PC-9 (cell line): ENCODE measurements at regions of chr15 and their contacts with region 1.

Region 1: DNA sequence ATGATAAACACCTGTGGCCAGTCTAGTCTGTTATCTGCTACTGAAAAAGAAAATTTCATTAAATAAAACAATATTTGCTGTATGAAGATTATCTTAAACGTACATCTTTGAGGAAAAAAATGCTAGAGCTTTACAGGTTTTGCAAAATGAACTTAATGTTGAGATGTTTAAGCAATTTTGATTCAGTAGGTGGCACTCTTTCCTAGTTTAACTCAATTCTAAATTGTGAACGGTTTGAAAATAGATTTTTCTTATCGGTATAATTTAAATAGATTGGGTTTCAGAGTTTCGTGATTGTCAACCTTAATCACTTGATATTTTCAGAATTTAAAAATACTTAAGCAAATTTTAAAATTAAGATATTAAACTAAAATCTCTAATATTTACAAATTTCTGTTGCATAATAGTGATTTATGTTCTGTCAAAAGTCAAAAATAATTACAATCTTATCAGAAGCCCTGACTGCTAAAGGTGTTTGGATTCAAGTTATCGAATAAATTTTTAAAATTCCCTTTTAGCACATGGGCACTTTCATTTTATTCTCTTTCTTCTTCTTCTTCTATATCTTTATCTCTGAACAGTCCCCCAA is 7.0 kb upstream of the RNF111 start:
- DNase-seq: no peak
- H3K4me3 ChIP-seq: no peak overlapping the region
- H3K27ac ChIP-seq: no peak overlapping the region
- H3K4me1 ChIP-seq: no peaks in the 10 kb centered on the region
- H3K27me3 ChIP-seq: no peaks in the 10 kb centered on the region
- CTCF ChIP-seq: peak; percentile 61

Region 2: GRCh38 chr15:58340176-58340575 is 640.3 kb before region 1 on chr15:
- CTCF ChIA-PET with region 1: no interaction called
- POLR2A ChIA-PET with region 1: no interaction called
- intact Hi-C with region 1: no loop called
- DNase-seq: no peak
- H3K4me3 ChIP-seq: no peak overlapping the region
- H3K27ac ChIP-seq: no peak overlapping the region
- H3K4me1 ChIP-seq: peaks cover 7% of the 10 kb centered on the region; the same call in 1 of the 2 replicates
- H3K27me3 ChIP-seq: no peaks in the 10 kb centered on the region
- CTCF ChIP-seq: no peak

Region 3: GRCh38 chr15:59042041-59042440 is 61.6 kb after region 1 on chr15:
- CTCF ChIA-PET with region 1: no interaction called
- POLR2A ChIA-PET with region 1: interaction called, 19 read pairs
- intact Hi-C with region 1: no loop called
- DNase-seq: no peak
- H3K4me3 ChIP-seq: no peak overlapping the region
- H3K27ac ChIP-seq: no peak overlapping the region
- H3K4me1 ChIP-seq: no peaks in the 10 kb centered on the region
- H3K27me3 ChIP-seq: no peaks in the 10 kb centered on the region
- CTCF ChIP-seq: no peak

Region 4: DNA sequence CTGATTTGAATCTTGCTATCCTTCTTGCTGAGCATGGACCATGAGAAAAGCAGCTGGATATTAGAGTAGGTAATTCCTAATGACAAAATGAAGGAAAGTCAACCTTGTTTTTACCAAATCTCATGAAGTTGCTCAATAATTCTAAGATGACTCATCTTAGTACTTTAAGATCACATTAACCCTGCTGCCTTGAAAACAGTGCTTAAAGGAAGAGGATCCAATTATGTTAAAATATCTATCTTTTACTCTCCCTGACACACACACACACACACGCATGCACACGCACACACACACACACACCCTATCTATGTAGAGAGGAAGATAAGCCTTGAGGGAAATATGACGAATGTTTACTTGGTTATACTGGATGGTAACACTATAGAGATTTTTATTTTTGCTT is 408.2 kb after region 1 on chr15:
- CTCF ChIA-PET with region 1: no interaction called
- POLR2A ChIA-PET with region 1: interaction called, 14 read pairs
- intact Hi-C with region 1: no loop called
- DNase-seq: peak in 1 of 2 experiments; percentile 52
- H3K4me3 ChIP-seq: no peak overlapping the region
- H3K27ac ChIP-seq: peak overlapping the region; percentile 11; the same call in 1 of the 2 replicates
- H3K4me1 ChIP-seq: peaks cover 9% of the 10 kb centered on the region
- H3K27me3 ChIP-seq: no peaks in the 10 kb centered on the region
- CTCF ChIP-seq: no peak

Region 5: DNA sequence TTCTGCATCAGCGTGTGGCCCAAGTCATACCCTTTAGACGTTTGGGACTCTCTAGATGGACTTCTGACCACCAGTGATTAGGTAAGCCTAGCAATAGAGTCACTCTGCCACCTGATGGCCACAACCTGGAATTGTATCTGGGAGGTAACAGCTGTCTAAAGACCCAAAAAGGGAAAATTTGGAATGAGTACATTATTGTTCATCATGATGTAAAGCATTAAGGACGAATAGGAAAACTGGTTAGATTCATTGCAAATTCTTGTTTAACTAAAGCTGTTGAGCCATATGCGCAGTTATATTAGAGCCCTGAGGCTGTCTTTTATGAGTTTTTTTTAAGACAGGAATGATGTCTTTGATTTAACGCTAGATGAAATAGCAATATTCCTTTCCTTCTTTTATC is 521.2 kb after region 1 on chr15:
- CTCF ChIA-PET with region 1: no interaction called
- POLR2A ChIA-PET with region 1: no interaction called
- intact Hi-C with region 1: loop called (anchors 2 kb)
- DNase-seq: peak; percentile 46 to 48
- H3K4me3 ChIP-seq: no peak overlapping the region
- H3K27ac ChIP-seq: no peak overlapping the region
- H3K4me1 ChIP-seq: no peaks in the 10 kb centered on the region
- H3K27me3 ChIP-seq: no peaks in the 10 kb centered on the region
- CTCF ChIP-seq: peak; percentile 82